Activated CD4-positive, alpha-beta memory T cell treated with anti-CD3 and anti-CD28 coated beads, Interleukin-2, amount 10 ng/mL, durations not matched to agents 7 days and 5 days (primary cell): ENCODE measurements at regions of chr12 and their contacts with region 1.

Region 1: DNA sequence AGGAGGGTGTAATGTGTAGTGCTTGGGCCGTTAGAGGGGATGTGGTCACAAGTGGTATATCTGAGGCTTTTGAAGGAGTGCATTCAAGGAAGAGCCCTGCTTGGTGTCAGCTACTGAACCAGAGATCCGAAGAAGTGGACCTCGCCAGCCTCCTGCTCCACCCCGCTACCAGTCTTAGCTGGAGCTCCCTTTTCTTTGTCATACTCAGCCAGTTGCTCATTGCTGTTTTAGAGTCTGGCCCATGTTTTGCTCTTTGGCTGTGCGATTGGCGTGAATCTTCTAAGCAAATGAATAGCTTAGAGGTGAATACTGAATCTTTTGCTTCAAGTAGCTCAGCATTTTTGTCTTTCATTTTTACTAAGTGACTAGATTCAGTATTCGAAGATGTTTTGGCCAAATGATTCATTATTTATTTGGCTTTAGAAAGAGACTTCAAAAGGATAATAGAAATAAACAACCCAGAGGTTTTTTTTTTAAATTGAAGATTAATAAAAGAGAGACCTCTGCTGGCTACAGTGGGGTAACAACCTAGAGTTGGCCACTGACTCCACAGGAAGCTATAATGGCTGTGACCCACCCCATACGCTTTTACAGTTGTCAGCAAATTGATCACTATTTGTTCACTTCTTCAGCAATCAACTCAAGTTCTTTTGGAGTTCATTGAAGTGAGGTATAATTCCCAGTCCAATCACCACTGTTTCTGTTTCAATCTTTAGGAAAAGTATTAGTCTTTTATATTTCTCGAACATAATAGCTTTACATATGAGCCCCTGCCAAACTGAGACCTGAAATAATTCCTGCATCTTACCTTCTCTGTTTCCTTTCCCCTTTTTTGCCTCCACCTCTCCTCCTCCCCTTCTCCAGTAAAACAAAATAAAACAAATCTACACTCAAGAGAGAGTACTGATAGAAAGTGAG is 19.9 kb downstream of the CDKN1B start:
- DNase-seq: peak; percentile 77
- H3K4me3 Mint-ChIP-seq: peak overlapping the region; percentile 68
- H3K27ac Mint-ChIP-seq: peak overlapping the region; percentile 94
- H3K4me1 Mint-ChIP-seq: peaks cover 67% of the 10 kb centered on the region
- H3K27me3 Mint-ChIP-seq: no peaks in the 10 kb centered on the region

Region 2: GRCh38 chr12:11741434-11742092 is 995.5 kb before region 1 on chr12:
- CTCF ChIA-PET with region 1: no interaction called
- POLR2A ChIA-PET with region 1: no interaction called
- DNase-seq: no peak
- H3K4me3 Mint-ChIP-seq: no peak overlapping the region
- H3K27ac Mint-ChIP-seq: no peak overlapping the region
- H3K4me1 Mint-ChIP-seq: peaks cover 10% of the 10 kb centered on the region
- H3K27me3 Mint-ChIP-seq: no peaks in the 10 kb centered on the region

Region 3: GRCh38 chr12:12467688-12468261 is 269.2 kb before region 1 on chr12:
- CTCF ChIA-PET with region 1: interaction called, 23 read pairs
- POLR2A ChIA-PET with region 1: interaction called, 12 read pairs
- DNase-seq: peak; percentile 77
- H3K4me3 Mint-ChIP-seq: peak overlapping the region; percentile 40
- H3K27ac Mint-ChIP-seq: peak overlapping the region; percentile 97
- H3K4me1 Mint-ChIP-seq: peaks cover 87% of the 10 kb centered on the region
- H3K27me3 Mint-ChIP-seq: no peaks in the 10 kb centered on the region

Region 4: DNA sequence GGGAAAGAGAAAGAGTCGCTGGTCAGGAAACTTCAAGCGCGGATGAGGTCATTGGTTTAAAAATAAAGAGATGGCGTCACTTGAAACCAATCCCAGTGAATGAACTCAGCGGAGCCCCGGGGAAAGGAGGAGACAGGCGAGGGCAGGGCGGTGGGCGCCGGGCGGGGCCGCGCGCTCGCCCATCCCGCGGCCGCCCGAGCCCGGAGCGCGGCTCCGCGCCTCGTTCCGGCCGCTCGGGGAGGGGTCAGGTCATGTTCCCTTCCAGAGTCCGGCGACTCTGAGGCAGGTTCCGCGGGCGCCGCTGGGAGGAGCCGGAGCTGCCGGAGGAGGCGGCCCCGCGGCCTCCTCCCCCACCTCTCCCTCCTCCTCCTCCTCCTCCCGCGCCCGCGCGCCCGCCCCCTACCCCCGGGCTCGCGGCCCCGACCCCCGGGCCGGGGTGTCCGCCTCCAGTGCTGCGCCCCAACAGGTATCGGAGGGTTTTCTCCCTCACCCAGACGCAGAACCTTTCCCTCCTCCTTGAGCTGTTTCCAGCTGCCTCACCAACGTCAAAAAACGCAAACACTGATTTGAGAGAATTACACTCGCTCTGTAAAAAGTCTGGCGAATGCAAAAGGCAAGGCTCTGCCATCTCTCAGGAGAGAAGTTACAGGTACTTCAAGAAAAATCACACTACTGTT is 174.3 kb before region 1 on chr12 and contains the start of gene DUSP16:
- CTCF ChIA-PET with region 1: interaction called, 9 read pairs
- POLR2A ChIA-PET with region 1: interaction called, 24 read pairs
- DNase-seq: peak; percentile 86
- H3K4me3 Mint-ChIP-seq: peak within 1 kb of the TSS; percentile 83
- H3K27ac Mint-ChIP-seq: peak within 1 kb of the TSS; percentile 94
- H3K4me1 Mint-ChIP-seq: peaks cover 42% of the 10 kb centered on the region
- H3K27me3 Mint-ChIP-seq: no peaks in the 10 kb centered on the region
- total RNA-seq, gene DUSP16: 77.3 to 85.2 TPM

Region 5: GRCh38 chr12:12654691-12655460 is 82.1 kb before region 1 on chr12:
- CTCF ChIA-PET with region 1: interaction called, 13 read pairs
- POLR2A ChIA-PET with region 1: no interaction called
- DNase-seq: no peak
- H3K4me3 Mint-ChIP-seq: no peak overlapping the region
- H3K27ac Mint-ChIP-seq: no peak overlapping the region
- H3K4me1 Mint-ChIP-seq: peaks cover 8% of the 10 kb centered on the region
- H3K27me3 Mint-ChIP-seq: no peaks in the 10 kb centered on the region

Region 6: GRCh38 chr12:12716793-12717585 is 20.0 kb before region 1 on chr12 and contains the start of gene CDKN1B:
- CTCF ChIA-PET with region 1: interaction called, 61 read pairs
- POLR2A ChIA-PET with region 1: interaction called, 845 read pairs
- DNase-seq: peak; percentile 92
- H3K4me3 Mint-ChIP-seq: peak within 1 kb of the TSS; percentile 97
- H3K27ac Mint-ChIP-seq: peak within 1 kb of the TSS; percentile 99
- H3K4me1 Mint-ChIP-seq: peaks cover 39% of the 10 kb centered on the region
- H3K27me3 Mint-ChIP-seq: no peaks in the 10 kb centered on the region
- total RNA-seq, gene CDKN1B: 164 to 166 TPM

Region 7: GRCh38 chr12:12813120-12814101 is 76.4 kb after region 1 on chr12 and contains the start of gene DDX47:
- CTCF ChIA-PET with region 1: interaction called, 14 read pairs
- POLR2A ChIA-PET with region 1: interaction called, 10 read pairs
- DNase-seq: peak; percentile 97
- H3K4me3 Mint-ChIP-seq: peak within 1 kb of the TSS; percentile 93
- H3K27ac Mint-ChIP-seq: peak within 1 kb of the TSS; percentile 85
- H3K4me1 Mint-ChIP-seq: peaks cover 77% of the 10 kb centered on the region
- H3K27me3 Mint-ChIP-seq: no peaks in the 10 kb centered on the region
- total RNA-seq, gene DDX47: 49.1 to 53.2 TPM

Region 8: GRCh38 chr12:13061421-13062128 is 324.6 kb after region 1 on chr12:
- CTCF ChIA-PET with region 1: no interaction called
- POLR2A ChIA-PET with region 1: no interaction called
- DNase-seq: no peak
- H3K4me3 Mint-ChIP-seq: no peak overlapping the region
- H3K27ac Mint-ChIP-seq: no peak overlapping the region
- H3K4me1 Mint-ChIP-seq: no peaks in the 10 kb centered on the region
- H3K27me3 Mint-ChIP-seq: no peaks in the 10 kb centered on the region